Activated naive CD4-positive, alpha-beta T cell treated with anti-CD3 and anti-CD28 coated beads, Interleukin-2, amount 10 ng/mL, durations not matched to agents 7 days and 5 days (primary cell): ENCODE measurements at regions of chr1 and their contacts with region 1.

Region 1: DNA sequence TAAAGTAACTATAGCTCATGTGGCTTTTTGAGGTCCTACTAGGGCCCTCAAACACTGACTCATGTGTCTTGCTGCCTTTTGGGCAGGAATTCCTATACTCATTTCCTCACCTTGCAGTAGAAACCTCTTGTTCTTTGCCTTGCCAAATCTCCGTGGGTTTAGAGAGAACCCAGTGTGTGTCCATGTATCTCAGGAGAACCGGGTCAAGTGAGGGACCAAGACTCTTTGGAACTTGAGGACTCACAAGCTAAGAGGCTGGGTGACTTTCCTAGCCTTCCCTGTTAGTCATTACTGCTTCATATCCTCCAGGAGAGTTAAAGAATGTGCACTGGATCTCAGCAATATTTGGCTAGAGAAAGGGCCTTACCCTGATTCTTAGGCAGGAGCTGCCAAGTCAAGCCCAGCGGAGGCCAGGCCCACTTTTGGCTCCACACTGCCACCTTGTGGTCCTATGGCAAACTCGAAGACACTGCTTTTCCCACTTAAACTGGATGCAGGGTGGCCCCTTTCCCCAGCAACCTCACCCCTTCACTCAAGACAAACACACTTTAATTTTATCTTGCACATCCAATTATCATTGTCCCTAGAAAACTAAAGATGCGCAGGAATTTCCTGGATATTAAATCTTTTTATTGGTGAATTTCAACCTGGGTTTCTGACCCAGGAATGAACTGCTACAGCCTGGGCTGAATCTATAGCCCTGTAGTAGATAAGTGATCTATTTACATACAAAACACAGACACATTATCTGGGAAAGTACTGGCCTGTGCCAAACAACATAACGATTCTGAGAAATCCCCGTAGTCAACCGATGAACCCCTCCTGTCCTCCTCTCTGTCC is 10.6 kb downstream of the AVPR1B start:
- DNase-seq: peak; percentile 88
- H3K4me3 Mint-ChIP-seq: no peak overlapping the region
- H3K27ac Mint-ChIP-seq: no peak overlapping the region
- H3K4me1 Mint-ChIP-seq: no peaks in the 10 kb centered on the region
- H3K27me3 Mint-ChIP-seq: peaks cover 42% of the 10 kb centered on the region

Region 2: DNA sequence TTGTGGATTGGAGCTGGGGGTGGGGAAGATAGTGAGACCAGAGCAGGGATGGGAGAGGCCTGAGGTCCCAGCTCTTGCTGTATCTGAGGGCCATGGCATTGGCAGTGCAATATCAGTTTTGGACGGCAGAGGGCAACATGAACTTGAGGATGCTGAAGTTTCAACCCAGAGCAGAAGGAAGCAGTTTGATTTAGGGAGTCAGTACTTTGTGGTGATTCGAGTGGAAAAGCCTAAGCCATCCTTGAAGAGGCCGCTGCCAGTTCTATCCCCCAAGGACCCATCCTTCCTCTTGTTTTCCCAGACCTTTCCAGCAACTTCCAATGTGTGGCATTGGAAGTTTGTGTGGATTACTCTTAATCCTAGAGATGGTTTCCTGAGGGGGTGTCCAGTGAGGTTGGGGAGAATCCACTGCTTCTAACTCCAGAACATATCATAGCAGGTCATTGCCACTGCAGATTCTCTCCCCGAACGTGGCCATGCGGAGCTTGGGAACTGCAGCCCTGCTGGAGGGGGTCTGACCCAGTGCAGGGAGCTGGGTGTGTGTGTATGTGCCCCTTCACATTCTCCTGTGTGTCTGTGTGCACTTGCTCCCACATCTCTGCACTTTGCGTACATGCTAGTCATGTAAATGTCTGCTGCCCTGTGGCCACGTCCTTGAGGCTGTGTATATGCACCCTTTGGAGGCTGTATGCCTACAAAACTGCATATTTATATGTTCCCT is 187.4 kb before region 1 on chr1:
- CTCF ChIA-PET with region 1: interaction called, 28 read pairs
- DNase-seq: peak; percentile 84
- H3K4me3 Mint-ChIP-seq: no peak overlapping the region
- H3K27ac Mint-ChIP-seq: no peak overlapping the region
- H3K4me1 Mint-ChIP-seq: no peaks in the 10 kb centered on the region
- H3K27me3 Mint-ChIP-seq: peaks cover 22% of the 10 kb centered on the region

Region 3: GRCh38 chr1:205983925-205984725 is 122.4 kb before region 1 on chr1:
- CTCF ChIA-PET with region 1: interaction called, 89 read pairs
- DNase-seq: peak; percentile 47
- H3K4me3 Mint-ChIP-seq: no peak overlapping the region
- H3K27ac Mint-ChIP-seq: no peak overlapping the region
- H3K4me1 Mint-ChIP-seq: no peaks in the 10 kb centered on the region
- H3K27me3 Mint-ChIP-seq: peaks cover 2% of the 10 kb centered on the region

Region 4: DNA sequence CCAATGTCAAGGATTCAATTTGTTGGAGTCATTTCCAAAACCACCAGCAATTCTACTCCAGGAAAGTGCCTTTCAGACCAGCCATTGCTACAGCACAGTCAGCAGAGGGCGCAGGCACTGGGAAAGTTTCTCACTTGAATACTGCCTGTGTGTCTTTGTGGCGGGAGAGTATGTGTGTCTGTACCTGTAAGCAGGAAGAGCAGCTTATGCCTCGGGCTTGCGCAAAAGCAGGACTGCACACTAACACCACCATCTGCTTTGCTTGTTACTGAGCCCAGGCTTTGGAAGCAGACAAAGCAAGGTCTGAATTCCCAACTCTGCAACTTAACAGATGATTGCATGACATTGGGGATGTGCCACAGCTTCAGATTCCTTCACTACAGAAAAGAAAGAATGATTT is 75.8 kb before region 1 on chr1:
- CTCF ChIA-PET with region 1: interaction called, 164 read pairs
- DNase-seq: peak; percentile 85
- H3K4me3 Mint-ChIP-seq: no peak overlapping the region
- H3K27ac Mint-ChIP-seq: no peak overlapping the region
- H3K4me1 Mint-ChIP-seq: peaks cover 23% of the 10 kb centered on the region
- H3K27me3 Mint-ChIP-seq: peaks cover 62% of the 10 kb centered on the region

Region 5: GRCh38 chr1:206059355-206059915 is 47.1 kb before region 1 on chr1:
- CTCF ChIA-PET with region 1: interaction called, 10 read pairs
- DNase-seq: no peak
- H3K4me3 Mint-ChIP-seq: no peak overlapping the region
- H3K27ac Mint-ChIP-seq: no peak overlapping the region
- H3K4me1 Mint-ChIP-seq: no peaks in the 10 kb centered on the region
- H3K27me3 Mint-ChIP-seq: peaks cover 46% of the 10 kb centered on the region